Motor neuron (in vitro differentiated cells): ENCODE measurements at regions of chr3 and their contacts with region 1.

Region 1: GRCh38 chr3:49539659-49540560 is 14.4 kb upstream of the BSN start:
- ATAC-seq: peak; percentile 88 to 97 (median 95)
- H3K4me3 ChIP-seq: peak overlapping the region; percentile 35 to 41 (median 38)
- H3K27ac ChIP-seq: peak overlapping the region; percentile 74 to 75
- H3K4me1 ChIP-seq: peaks cover 16 to 18% of the 10 kb centered on the region in 2 donors

Region 2: GRCh38 chr3:49673715-49674496 is 134.0 kb after region 1 on chr3 and contains the start of gene APEH:
- in situ Hi-C with region 1: loop called in 2 of 9 experiments (anchors 10 kb)
- ATAC-seq: peak; percentile 87 to 92 (median 88)
- H3K4me3 ChIP-seq: peak within 1 kb of the TSS; percentile 60 to 95 (median 82)
- H3K27ac ChIP-seq: peak within 1 kb of the TSS; percentile 92 to 94
- H3K4me1 ChIP-seq: peaks cover 6 to 7% of the 10 kb centered on the region in 2 donors
- total RNA-seq, gene APEH: 52.8 to 143 (median 75.2) TPM